Spleen (tissue), 13 donors: ENCODE measurements at regions of chr9 and their contacts with region 1.

Region 1: GRCh38 chr9:112074250-112075008 is 100.7 kb downstream of the SUSD1 start:
- DNase-seq: no peak
- H3K4me3 ChIP-seq: no peak overlapping the region
- H3K27ac ChIP-seq: peak overlapping the region in 7 of 8 donors; percentile 60 to 81 (median 80)
- H3K4me1 ChIP-seq: peaks cover under 1 to 84% (median 54%) of the 10 kb centered on the region in 6 donors
- H3K27me3 ChIP-seq: no peaks in the 10 kb centered on the region
- CTCF ChIP-seq: peak; percentile 62 to 97 (median 84)
- POLR2A ChIP-seq: no peak

Region 2: DNA sequence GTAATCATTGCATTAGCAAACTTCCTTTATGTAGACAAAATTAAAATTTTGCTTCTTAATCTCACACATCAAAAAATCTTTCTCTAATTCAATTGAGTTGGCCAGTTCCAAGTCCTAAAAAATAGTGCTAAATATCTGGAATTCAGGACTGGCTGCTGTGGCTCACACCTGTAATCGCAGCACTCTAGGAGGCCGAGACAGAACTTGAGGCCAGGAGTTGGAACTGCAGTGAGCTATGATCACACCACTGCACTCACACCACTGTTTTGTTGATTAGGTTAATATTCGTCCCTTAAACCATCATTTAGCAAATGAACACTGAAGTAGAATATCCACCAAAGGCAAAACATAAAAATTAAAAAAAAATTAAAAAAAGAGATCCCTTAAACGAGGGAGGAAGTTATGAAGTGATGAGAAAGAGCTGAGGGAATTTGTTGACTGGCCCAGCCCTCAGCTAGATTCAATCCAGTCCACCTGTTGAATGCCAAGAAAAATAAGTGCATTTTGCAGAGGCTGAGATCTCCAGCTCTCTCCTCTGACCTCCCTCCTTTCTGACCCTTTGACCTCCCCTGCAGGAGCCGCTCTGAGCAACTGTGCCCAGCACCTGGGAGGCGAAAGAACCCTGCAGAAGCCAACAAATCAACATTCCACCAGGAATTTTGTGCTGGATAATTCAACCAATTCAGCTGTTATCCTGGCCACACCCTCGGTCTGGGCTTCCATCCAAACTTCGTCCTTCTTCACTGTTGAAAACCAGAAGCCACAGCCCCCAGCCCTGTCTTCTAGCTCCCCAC is 841.2 kb before region 1 on chr9:
- intact Hi-C with region 1: no loop called
- DNase-seq: no peak
- H3K4me3 ChIP-seq: no peak overlapping the region
- H3K27ac ChIP-seq: no peak overlapping the region
- H3K4me1 ChIP-seq: no peaks in the 10 kb centered on the region
- H3K27me3 ChIP-seq: no peaks in the 10 kb centered on the region
- CTCF ChIP-seq: no peak
- POLR2A ChIP-seq: no peak

Region 3: GRCh38 chr9:111759762-111760639 is 314.4 kb before region 1 on chr9:
- intact Hi-C with region 1: loop called (anchors 5 kb)
- DNase-seq: no peak
- H3K4me3 ChIP-seq: no peak overlapping the region
- H3K27ac ChIP-seq: peak overlapping the region in 1 of 8 donors; percentile 40
- H3K4me1 ChIP-seq: peaks cover 0 to 18% (median 5%) of the 10 kb centered on the region in 6 donors
- H3K27me3 ChIP-seq: no peaks in the 10 kb centered on the region
- CTCF ChIP-seq: peak; percentile 44 to 86 (median 73)
- POLR2A ChIP-seq: no peak

Region 4: DNA sequence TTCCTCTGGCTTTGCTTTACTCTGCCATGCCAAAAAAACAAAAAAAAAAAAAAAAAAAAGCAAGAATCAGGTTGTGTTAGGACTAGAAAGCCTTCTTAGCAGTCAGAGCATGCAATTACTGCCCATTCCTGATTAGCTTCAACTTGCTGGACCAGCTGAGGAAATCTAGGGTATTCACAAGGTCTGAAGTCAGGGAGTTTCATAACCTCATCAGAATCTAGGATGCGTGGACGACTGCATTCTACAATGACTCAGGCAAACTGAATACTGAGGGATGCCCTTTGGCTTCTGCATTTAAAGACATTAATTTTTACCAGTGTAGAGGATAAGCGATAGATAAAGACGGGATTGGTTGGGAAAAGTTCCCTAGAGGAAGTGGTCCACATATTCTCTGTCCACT is 240.5 kb before region 1 on chr9:
- intact Hi-C with region 1: loop called (anchors 5 kb)
- DNase-seq: no peak
- H3K4me3 ChIP-seq: no peak overlapping the region
- H3K27ac ChIP-seq: no peak overlapping the region
- H3K4me1 ChIP-seq: peaks cover 0 to 14% (median 6%) of the 10 kb centered on the region in 6 donors
- H3K27me3 ChIP-seq: no peaks in the 10 kb centered on the region
- CTCF ChIP-seq: no peak
- POLR2A ChIP-seq: no peak

Region 5: DNA sequence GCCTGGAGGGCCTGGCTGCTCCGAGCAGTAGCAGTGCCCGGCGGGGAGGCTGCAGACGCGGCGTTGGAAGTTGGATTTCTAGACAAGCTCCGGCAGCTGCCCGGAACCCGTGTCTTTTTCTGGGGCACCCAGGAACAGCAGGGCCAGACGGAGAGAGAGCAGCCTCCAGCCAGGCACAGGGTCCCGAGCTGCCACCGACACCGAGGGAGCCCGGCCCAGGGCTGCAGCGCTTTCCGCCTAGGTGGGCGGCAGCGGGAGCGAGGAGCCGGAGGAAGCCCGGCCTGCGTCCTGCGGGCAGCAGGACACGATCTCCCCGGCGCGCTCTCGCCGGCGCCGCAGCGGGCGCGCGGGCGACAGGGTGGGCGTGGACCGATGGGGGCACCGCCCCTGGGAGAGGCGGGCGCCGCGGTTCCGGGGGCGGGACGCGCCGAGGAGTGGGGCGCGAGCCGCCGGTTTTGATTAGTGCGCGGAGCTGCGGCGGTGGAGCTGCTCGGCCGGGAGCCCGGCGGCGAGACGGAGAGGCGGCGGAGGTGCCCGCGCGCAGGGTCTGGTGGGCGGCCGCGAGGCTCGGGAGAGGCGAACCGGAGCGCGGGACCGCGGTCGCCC is 178.0 kb before region 1 on chr9 and contains the start of gene UGCG:
- intact Hi-C with region 1: loop called (anchors 10 kb)
- DNase-seq: peak; percentile 98
- H3K4me3 ChIP-seq: peak within 1 kb of the TSS; percentile 79 to 97 (median 91)
- H3K27ac ChIP-seq: peak within 1 kb of the TSS; percentile 78 to 98 (median 98)
- H3K4me1 ChIP-seq: peaks cover 29 to 74% (median 56%) of the 10 kb centered on the region in 6 donors
- H3K27me3 ChIP-seq: no peaks in the 10 kb centered on the region
- CTCF ChIP-seq: peak in 3 of 11 experiments; percentile 6 to 29 (median 25)
- POLR2A ChIP-seq: peak; percentile 80 to 86 (median 82)
- total RNA-seq, gene UGCG: 62.8 to 178 (median 100.0) TPM

Region 6: GRCh38 chr9:112145886-112146285 is 71.5 kb after region 1 on chr9:
- intact Hi-C with region 1: no loop called
- DNase-seq: no peak
- H3K4me3 ChIP-seq: no peak overlapping the region
- H3K27ac ChIP-seq: no peak overlapping the region
- H3K4me1 ChIP-seq: peaks cover 0 to 3% (median under 1%) of the 10 kb centered on the region in 6 donors
- H3K27me3 ChIP-seq: no peaks in the 10 kb centered on the region
- CTCF ChIP-seq: no peak
- POLR2A ChIP-seq: no peak

Region 7: DNA sequence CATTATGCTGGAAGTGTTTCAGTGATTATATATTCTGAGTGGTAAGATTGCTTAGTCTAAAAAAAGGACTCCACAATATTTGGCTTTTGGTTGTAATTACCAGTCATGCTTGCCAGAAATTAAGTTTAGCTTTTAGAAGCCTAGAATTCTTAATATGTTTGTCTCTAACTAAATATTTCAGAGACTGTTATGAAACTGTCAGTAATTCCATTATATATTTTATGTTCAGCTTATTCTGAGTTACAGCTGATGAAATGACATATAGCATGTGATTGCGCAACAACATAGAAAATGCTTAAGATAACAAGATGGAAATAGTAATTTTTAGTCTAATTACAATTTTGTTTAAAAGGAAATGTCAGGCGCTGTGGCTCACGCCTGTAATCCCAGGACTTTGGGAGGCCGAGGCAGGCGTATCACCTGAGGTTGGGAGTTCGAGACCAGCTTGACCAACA is 456.3 kb after region 1 on chr9:
- intact Hi-C with region 1: no loop called
- DNase-seq: no peak
- H3K4me3 ChIP-seq: no peak overlapping the region
- H3K27ac ChIP-seq: no peak overlapping the region
- H3K4me1 ChIP-seq: no peaks in the 10 kb centered on the region
- H3K27me3 ChIP-seq: no peaks in the 10 kb centered on the region
- CTCF ChIP-seq: no peak
- POLR2A ChIP-seq: no peak